Colonic mucosa (tissue), 4 donors: ENCODE measurements at regions of chr14 and their contacts with region 1.

Region 1: GRCh38 chr14:58244556-58245387 is at the start of gene PSMA3:
- DNase-seq: peak; percentile 98
- H3K4me3 ChIP-seq: peak within 1 kb of the TSS; percentile 88
- H3K27ac ChIP-seq: peak within 1 kb of the TSS; percentile 99
- H3K4me1 ChIP-seq: no peaks in the 10 kb centered on the region
- H3K27me3 ChIP-seq: no peaks in the 10 kb centered on the region
- CTCF ChIP-seq: no peak
- total RNA-seq, gene PSMA3: 116 to 182 TPM

Region 2: DNA sequence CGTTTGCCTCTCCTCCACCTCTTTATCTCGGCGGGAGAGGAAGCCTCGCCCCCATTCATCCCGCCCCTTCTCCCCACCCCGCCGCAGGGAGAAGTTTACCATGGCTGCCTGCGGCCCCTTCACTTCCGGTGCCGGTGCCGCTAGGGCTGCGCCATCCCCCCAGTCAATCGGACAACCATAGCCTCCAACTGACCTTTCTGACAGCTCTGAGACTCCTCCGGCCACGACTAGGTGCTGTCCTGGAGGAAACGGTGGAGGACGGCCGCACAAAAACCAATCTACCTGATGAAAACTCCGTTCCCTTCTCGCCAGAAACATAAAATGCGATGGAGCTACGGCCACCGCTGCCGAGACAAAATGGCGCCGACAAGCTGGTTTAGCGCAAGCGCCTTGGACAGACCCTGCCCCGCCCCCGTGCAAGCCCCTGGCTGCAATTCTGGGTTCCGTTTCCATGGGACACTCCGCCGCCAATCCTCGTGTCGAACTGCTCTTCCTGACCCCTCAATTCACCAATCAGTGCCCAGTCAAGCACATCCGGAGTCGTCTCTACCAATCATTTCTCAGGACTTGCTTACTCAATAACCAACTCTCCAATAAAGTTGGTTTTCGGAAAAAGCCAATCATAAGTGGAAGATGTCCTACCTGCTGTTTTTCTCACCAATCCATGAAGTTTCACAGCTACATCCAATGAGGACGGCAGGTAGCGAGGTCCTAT is 53.1 kb after region 1 on chr14:
- intact Hi-C with region 1: loop called (anchors 5 kb)
- DNase-seq: peak; percentile 99
- H3K4me3 ChIP-seq: peak overlapping the region; percentile 100
- H3K27ac ChIP-seq: peak overlapping the region; percentile 96
- H3K4me1 ChIP-seq: peaks cover 8% of the 10 kb centered on the region
- H3K27me3 ChIP-seq: no peaks in the 10 kb centered on the region
- CTCF ChIP-seq: no peak